A549 (cell line): ENCODE measurements at regions of chr2 and their contacts with region 1.

Region 1: DNA sequence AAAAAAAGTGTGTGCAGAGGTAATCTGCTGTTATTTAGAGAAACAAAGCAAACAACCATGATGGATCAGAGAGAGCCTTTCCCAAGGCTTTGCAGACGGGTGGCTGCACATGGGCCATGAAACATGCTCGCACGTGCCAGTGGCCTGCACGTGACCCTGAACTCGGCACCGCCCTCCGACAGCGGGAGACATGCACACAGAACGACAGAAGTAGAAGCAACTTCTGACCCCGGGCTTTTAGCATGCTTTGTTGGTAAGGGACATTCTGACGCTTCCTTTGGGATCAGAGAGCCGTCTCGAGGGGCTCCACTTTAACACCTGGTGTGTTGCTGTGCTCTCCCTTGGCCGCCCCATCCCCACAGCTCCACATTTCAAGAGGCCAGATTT is 112.5 kb downstream of the KCNF1 start:
- DNase-seq: no peak
- ATAC-seq: no peak
- H3K4me3 ChIP-seq: no peak overlapping the region
- H3K27ac ChIP-seq: no peak overlapping the region
- H3K4me1 ChIP-seq: no peaks in the 10 kb centered on the region
- CTCF ChIP-seq: no peak
- EP300 ChIP-seq: no peak
- POLR2A ChIP-seq: no peak
- RAD21 ChIP-seq: no peak

Region 2: GRCh38 chr2:10790228-10790979 is 233.8 kb before region 1 on chr2:
- CTCF ChIA-PET with region 1: no interaction called
- POLR2A ChIA-PET with region 1: no interaction called
- DNase-seq: no peak
- ATAC-seq: no peak
- H3K4me3 ChIP-seq: no peak overlapping the region
- H3K27ac ChIP-seq: no peak overlapping the region
- H3K4me1 ChIP-seq: no peaks in the 10 kb centered on the region
- CTCF ChIP-seq: no peak
- EP300 ChIP-seq: no peak
- POLR2A ChIP-seq: no peak
- RAD21 ChIP-seq: no peak

Region 3: DNA sequence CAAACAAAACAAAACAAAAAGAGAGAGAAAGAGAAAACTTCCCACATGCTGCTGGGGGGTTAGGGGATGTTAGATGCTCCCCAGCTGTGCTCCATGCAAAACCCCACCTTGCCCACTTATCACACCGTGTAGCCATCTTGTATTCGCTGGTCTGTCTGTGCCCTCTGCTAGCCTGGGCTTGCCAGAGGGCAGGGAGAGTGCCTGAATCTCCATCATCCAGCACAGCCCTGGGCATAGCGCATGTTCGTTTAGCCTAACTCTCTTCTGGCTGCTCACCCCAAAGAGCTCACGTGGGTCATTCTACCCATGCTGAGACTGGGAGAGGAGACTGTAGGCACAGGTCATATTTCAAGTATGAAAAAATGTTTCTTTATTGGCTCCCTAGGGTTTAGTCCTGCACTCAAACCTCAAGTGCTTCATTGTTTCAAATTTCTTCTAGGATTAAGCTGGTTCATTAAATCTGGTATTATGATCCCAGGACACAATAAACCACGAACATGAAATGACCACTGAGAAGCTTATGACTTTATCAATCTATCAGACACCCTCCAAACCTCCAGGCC is 12.0 kb before region 1 on chr2:
- CTCF ChIA-PET with region 1: no interaction called
- POLR2A ChIA-PET with region 1: no interaction called
- DNase-seq: no peak
- ATAC-seq: no peak
- H3K4me3 ChIP-seq: no peak overlapping the region
- H3K27ac ChIP-seq: no peak overlapping the region
- H3K4me1 ChIP-seq: no peaks in the 10 kb centered on the region
- CTCF ChIP-seq: no peak
- EP300 ChIP-seq: no peak
- POLR2A ChIP-seq: no peak
- RAD21 ChIP-seq: no peak

Region 4: DNA sequence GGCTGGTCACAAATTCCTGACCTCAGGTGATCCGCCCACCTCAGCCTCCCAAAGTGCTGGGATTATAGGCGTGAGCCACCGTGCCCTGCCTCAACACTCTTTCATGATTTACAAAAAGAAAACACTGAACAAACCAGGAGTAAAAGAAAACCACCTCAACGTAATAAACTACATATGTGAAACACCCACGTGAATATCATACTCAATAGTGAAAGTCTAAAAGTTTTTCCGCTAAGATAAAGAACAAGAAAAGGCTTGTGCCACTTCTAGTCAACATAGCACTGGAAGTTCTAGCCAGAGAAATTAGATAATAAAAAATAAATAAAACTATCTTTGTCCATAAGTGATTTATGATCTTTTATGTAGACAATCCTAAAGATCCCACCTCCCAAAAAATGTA is 251.7 kb after region 1 on chr2:
- CTCF ChIA-PET with region 1: no interaction called
- POLR2A ChIA-PET with region 1: interaction called, 11 read pairs
- DNase-seq: no peak
- ATAC-seq: no peak; a peak in 1 of 6 replicates
- H3K4me3 ChIP-seq: no peak overlapping the region
- H3K27ac ChIP-seq: no peak overlapping the region
- H3K4me1 ChIP-seq: peaks cover 12% of the 10 kb centered on the region; the same call in 2 of the 3 replicates
- CTCF ChIP-seq: no peak
- EP300 ChIP-seq: no peak
- POLR2A ChIP-seq: no peak
- RAD21 ChIP-seq: no peak